ENCODE measurements at regions of chr1 and their contacts with region 1.

Region 1: GRCh38 chr1:183635606-183636333 is at the start of gene ARPC5:
- DNase-seq: peak; percentile 95
- ATAC-seq: peak; percentile 89
- H3K4me3 Mint-ChIP-seq: peak within 1 kb of the TSS; percentile 100
- H3K27ac Mint-ChIP-seq: peak within 1 kb of the TSS; percentile 100
- H3K4me1 Mint-ChIP-seq: peaks cover 46% of the 10 kb centered on the region
- H3K27me3 Mint-ChIP-seq: no peaks in the 10 kb centered on the region
- CTCF ChIP-seq: no peak
- total RNA-seq, gene ARPC5: 193 and 224 TPM in 2 replicates

Region 2: DNA sequence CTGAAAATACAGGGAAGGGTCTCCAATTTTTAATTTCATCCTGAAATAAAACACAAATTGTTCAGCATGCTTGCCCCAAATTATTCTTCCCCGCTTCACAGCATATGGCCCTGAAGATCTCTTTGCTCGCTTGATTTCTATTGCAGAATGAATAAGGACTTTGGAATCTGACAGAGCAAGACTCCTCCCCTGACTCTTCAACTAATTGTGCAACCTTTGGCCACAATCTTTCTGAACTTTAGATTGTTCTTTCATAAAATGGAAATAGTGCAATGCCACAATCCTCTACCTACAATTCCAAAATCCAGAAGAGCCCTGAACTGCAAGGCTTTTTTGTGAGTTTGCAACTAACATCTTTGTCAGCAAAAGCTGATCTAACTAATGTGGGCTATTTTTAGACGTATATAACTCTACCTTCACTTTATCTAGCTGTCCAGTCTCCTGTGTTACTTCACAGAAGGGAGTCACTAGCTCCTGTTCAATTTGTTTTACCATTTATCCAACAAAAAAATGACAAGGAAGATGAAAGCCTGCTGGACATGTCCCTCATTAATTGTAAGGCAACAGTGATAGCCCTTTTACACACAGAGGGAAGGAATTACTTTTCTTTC is 1060.1 kb before region 1 on chr1:
- CTCF ChIA-PET with region 1: no interaction called
- POLR2A ChIA-PET with region 1: no interaction called
- intact Hi-C with region 1: loop called (anchors 10 kb)
- DNase-seq: no peak
- ATAC-seq: no peak
- H3K4me3 Mint-ChIP-seq: no peak overlapping the region
- H3K27ac Mint-ChIP-seq: no peak overlapping the region
- H3K4me1 Mint-ChIP-seq: peaks cover 19% of the 10 kb centered on the region
- H3K27me3 Mint-ChIP-seq: no peaks in the 10 kb centered on the region
- CTCF ChIP-seq: no peak

Region 3: DNA sequence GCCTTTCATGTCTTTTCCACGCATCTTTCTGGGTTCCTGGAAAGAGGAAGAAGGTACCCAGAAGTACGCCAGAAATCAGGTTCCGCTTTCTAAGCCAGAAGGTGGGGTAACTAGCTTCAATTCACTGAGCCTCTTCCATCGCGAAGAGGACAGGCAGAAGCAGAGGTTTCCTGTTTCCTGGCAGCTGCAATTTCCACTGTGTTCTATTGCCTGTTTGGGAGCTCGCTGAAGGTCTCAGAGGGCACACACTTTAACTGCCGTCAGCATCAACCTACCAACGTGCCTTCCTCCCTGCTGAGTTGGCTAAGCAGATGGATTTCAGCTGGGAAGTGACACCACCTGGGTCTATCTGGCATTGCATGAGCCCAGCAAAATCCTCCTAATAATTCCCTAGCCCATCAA is 55.5 kb before region 1 on chr1:
- CTCF ChIA-PET with region 1: no interaction called
- POLR2A ChIA-PET with region 1: interaction called, 12 read pairs
- intact Hi-C with region 1: no loop called
- DNase-seq: no peak
- ATAC-seq: peak; percentile 86
- H3K4me3 Mint-ChIP-seq: peak overlapping the region; percentile 61
- H3K27ac Mint-ChIP-seq: peak overlapping the region; percentile 85
- H3K4me1 Mint-ChIP-seq: peaks cover 32% of the 10 kb centered on the region
- H3K27me3 Mint-ChIP-seq: no peaks in the 10 kb centered on the region
- CTCF ChIP-seq: no peak

Region 4: DNA sequence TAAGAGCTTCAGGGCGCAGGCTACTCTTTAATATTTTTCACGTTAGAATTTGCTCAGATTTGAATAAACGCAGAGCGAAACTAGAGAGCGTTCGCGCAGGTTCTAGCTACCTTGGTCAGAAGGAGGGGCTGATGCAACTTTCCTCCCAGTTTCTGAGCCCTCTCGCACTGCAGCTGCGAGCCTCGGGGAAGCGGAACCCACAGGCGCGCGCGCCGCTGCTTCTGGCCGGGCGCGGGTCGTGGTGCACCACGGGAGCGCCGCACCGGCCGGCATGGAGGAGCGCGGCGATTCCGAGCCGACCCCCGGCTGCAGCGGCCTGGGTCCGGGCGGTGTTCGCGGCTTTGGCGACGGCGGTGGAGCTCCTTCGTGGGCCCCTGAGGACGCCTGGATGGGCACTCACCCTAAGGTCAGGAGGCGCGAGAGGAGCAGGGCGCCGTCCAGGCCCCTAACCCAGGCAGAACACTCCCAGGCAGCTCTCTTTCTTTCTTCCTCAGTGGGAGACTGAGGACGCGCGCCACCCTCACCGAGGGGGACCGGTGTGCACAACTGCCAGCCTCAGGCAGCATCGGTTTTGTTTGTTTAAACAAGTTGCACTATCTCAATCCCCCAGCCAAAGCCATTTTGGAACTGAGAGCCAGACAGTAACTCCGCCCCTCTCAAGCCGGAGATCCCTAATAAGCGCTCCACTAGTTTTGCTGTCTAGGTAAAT is 415.9 kb after region 1 on chr1 and contains the start of gene TSEN15:
- CTCF ChIA-PET with region 1: no interaction called
- POLR2A ChIA-PET with region 1: interaction called, 12 read pairs
- intact Hi-C with region 1: loop called (anchors 1 kb)
- DNase-seq: peak; percentile 76
- ATAC-seq: peak; percentile 95
- H3K4me3 Mint-ChIP-seq: peak within 1 kb of the TSS; percentile 98
- H3K27ac Mint-ChIP-seq: peak within 1 kb of the TSS; percentile 98
- H3K4me1 Mint-ChIP-seq: peaks cover 36% of the 10 kb centered on the region
- H3K27me3 Mint-ChIP-seq: peaks cover 26% of the 10 kb centered on the region
- CTCF ChIP-seq: no peak
- total RNA-seq, gene TSEN15: 60.8 and 61.2 TPM in 2 replicates

Region 5: DNA sequence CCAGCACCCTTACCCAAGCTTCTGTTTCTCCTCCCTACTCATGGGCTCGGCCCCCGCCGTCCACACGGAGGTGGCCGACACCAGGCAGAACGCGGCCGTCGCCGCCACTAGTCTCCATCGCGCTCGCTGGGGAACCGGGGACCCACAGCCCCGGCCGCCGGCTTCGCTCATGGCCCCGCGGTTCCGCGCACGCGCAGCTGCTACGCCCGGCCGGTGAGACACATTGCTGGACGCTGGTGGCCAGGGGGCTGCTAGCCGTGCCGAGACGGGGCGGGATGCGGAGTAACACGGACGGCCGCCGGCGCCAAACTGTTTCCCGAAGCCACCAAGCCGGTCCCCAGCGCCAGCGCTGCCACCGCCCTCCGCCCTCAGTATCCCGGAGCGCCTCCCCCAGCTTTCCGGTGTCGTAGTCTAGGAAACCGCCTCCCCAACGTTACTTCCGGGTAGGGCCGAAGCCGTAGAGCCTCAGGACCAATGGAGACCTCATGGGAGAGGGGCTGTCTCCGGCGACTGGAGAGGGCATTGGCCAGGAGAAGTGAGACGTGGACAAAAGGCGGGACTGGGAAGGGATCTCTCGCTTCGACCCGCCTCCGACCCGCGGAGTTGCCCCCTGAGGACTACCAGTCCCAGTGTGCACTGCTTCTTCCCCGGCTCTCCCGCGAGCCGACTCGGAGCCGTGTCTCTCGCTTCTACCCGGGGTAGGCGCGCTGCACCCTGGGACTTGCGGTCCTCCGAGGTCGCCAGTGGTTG is 1118.9 kb after region 1 on chr1 and contains the start of gene EDEM3:
- CTCF ChIA-PET with region 1: no interaction called
- POLR2A ChIA-PET with region 1: interaction called, 6 read pairs
- intact Hi-C with region 1: loop called (anchors 5 kb)
- DNase-seq: peak; percentile 90
- ATAC-seq: peak; percentile 95
- H3K4me3 Mint-ChIP-seq: peak within 1 kb of the TSS; percentile 95
- H3K27ac Mint-ChIP-seq: peak within 1 kb of the TSS; percentile 86
- H3K4me1 Mint-ChIP-seq: peaks cover 23% of the 10 kb centered on the region
- H3K27me3 Mint-ChIP-seq: peaks cover under 1% of the 10 kb centered on the region
- CTCF ChIP-seq: no peak
- total RNA-seq, gene EDEM3: 11.5 and 16.2 TPM in 2 replicates

Measured in activated B cell treated with CpG ODN at 0.5 μM for 24 hours (primary cell).